ENCODE measurements at regions of chr19 and their contacts with region 1.

Region 1: GRCh38 chr19:20923077-20923871 is at the start of gene ZNF85:
- DNase-seq: peak; percentile 93
- H3K4me3 ChIP-seq: peak within 1 kb of the TSS; percentile 54 to 63
- H3K27ac ChIP-seq: peak within 1 kb of the TSS; percentile 88 to 91
- H3K4me1 ChIP-seq: no peaks in the 10 kb centered on the region
- H3K27me3 ChIP-seq: no peaks in the 10 kb centered on the region
- CTCF ChIP-seq: no peak
- POLR2A ChIP-seq: peak; percentile 46
- total RNA-seq, gene ZNF85: 10.9 to 23.5 TPM

Region 2: GRCh38 chr19:20999731-21000352 is 76.6 kb after region 1 on chr19:
- intact Hi-C with region 1: no loop called
- DNase-seq: peak; percentile 59
- H3K4me3 ChIP-seq: peak overlapping the region; percentile 11 to 22
- H3K27ac ChIP-seq: no peak overlapping the region
- H3K4me1 ChIP-seq: no peaks in the 10 kb centered on the region
- H3K27me3 ChIP-seq: no peaks in the 10 kb centered on the region
- CTCF ChIP-seq: no peak
- POLR2A ChIP-seq: no peak

Region 3: DNA sequence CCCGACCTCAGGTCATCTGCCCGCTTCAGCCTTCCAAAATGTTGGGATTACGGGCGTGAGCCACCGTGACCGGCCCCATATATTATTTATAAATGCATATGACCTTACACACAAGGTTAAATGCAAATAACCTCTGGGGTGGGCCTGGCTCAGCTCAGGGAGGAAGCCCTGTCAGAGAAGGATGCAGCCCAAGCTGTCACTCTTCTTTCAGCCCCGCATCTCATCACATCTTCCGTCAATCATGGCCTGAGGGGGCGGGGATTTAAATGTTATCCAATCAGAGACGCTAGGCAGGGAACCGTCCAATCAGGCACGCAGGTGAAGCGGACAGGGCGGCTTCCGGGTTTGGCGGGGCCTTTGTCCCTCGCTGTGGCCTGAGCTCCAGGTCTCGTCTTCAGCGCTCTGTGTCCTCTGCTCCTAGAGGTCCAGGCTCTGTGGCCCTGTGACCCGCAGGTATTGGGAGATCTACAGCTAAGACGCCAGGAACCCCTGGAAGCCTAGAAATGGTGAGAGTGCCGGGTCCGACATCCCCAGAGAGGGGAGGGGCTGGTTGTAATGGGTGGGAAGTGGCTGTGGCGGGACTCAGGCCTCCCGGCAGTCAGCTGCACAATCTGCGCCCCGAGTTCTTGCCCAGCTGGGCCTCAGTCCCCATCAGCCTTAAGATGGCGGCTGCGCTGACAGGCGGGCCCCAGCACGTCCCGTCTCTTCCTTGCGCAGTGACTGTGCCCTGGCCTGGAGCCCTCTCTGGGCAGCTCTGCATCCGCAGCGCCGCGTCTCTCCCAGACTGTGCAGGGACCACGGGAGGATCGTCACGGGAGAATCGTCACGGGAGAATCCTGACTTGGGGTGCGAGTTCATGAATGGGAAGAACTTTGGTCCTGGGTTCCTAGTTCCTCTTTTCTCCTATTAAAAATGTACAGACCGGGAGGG is 97.3 kb after region 1 on chr19 and contains the start of gene ZNF430:
- intact Hi-C with region 1: loop called (anchors 10 kb)
- DNase-seq: peak; percentile 94
- H3K4me3 ChIP-seq: peak within 1 kb of the TSS; percentile 58 to 62
- H3K27ac ChIP-seq: peak within 1 kb of the TSS; percentile 83 to 87
- H3K4me1 ChIP-seq: no peaks in the 10 kb centered on the region
- H3K27me3 ChIP-seq: no peaks in the 10 kb centered on the region
- CTCF ChIP-seq: no peak
- POLR2A ChIP-seq: peak; percentile 64
- total RNA-seq, gene ZNF430: 9.3 to 11.9 TPM

Region 4: GRCh38 chr19:21141787-21142464 is 218.7 kb after region 1 on chr19 and contains the start of gene ZNF431:
- intact Hi-C with region 1: no loop called
- DNase-seq: peak; percentile 94
- H3K4me3 ChIP-seq: peak within 1 kb of the TSS; percentile 55 to 63
- H3K27ac ChIP-seq: peak within 1 kb of the TSS; percentile 68 to 75
- H3K4me1 ChIP-seq: no peaks in the 10 kb centered on the region
- H3K27me3 ChIP-seq: no peaks in the 10 kb centered on the region
- CTCF ChIP-seq: no peak
- POLR2A ChIP-seq: peak; percentile 82
- total RNA-seq, gene ZNF431: 12.7 to 54.7 TPM